ENCODE measurements at regions of chr17 and their contacts with region 1.

Region 1: GRCh38 chr17:67221062-67221998 is 23.7 kb downstream of the HELZ start:
- DNase-seq: peak in 6 of 9 donors; percentile 12 to 56 (median 28)
- ATAC-seq: peak; percentile 90
- H3K4me3 ChIP-seq: no peak overlapping the region
- H3K4me3 Mint-ChIP-seq: peak overlapping the region in 1 of 10 donors; percentile 4
- H3K27ac ChIP-seq: no peak overlapping the region
- H3K27ac Mint-ChIP-seq: peak overlapping the region in 2 of 9 donors; percentile 4 to 5
- H3K4me1 ChIP-seq: peaks cover 0 to 4% of the 10 kb centered on the region in 2 donors
- H3K4me1 Mint-ChIP-seq: peaks cover 27 to 63% (median 56%) of the 10 kb centered on the region in 7 donors
- H3K27me3 ChIP-seq: no peaks in the 10 kb centered on the region
- H3K27me3 Mint-ChIP-seq: no peaks in the 10 kb centered on the region

Region 2: DNA sequence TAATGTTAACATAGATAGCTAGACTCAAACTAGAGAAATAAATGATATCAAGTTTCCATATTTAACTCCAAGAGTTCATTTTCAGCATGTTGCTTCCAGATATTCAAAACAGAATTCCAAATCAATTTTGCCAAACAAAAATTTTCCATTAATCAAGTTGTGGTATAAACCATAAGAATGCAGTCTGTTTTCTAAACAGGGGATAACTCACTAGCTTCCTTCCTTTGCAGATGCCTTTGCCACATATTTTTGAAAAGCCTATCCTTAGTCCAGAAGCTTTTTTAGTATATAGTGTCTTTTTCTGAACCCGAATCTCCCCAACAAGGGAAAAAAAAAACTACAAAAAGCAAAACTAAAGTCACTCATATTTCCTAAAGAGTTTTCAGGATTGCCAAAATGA is 37.8 kb before region 1 on chr17:
- CTCF ChIA-PET with region 1: no interaction called
- POLR2A ChIA-PET with region 1: no interaction called
- intact Hi-C with region 1: no loop called
- DNase-seq: no peak
- ATAC-seq: no peak
- H3K4me3 ChIP-seq: no peak overlapping the region
- H3K4me3 Mint-ChIP-seq: no peak overlapping the region
- H3K27ac ChIP-seq: no peak overlapping the region
- H3K27ac Mint-ChIP-seq: no peak overlapping the region
- H3K4me1 ChIP-seq: no peaks in the 10 kb centered on the region
- H3K4me1 Mint-ChIP-seq: peaks cover 0 to 9% (median 5%) of the 10 kb centered on the region in 7 donors
- H3K27me3 ChIP-seq: no peaks in the 10 kb centered on the region
- H3K27me3 Mint-ChIP-seq: no peaks in the 10 kb centered on the region

Region 3: DNA sequence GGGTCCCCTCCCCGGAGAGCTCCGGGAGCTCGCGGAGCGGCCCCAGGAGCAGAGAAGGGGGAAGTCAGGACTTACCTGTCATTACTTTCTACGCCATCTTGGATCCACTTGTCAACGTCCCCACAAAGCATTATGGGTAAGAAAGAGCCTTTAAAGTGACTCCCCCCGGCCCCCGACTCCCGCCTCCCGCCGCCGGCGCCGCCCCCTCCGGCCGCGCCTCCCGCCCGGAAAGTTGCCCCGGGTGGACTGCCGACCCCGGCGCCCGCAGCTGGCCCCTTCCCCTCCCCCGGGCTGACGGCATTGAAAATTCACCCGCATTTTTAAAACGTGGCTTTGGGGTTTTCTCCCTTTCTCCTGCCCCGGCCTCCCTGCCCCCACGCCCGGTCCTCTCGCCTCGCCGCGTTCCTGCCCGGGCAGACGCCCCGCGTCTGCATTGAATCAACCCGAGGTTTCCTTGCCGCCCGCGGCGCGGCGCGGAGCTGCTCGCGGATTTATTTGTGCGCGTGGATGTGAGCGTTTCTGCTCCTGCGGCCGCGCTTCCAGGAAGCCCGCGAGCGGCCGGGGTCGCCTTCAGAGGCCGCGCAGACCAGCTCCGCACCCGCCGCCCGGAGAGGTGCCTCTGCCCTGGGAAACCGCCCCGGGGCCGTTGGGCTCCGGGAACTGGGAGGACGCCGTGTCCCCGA is 23.9 kb after region 1 on chr17 and contains the start of gene HELZ:
- CTCF ChIA-PET with region 1: no interaction called
- POLR2A ChIA-PET with region 1: no interaction called
- intact Hi-C with region 1: loop called in 1 of 2 experiments (anchors 2 kb)
- DNase-seq: peak; percentile 45 to 81 (median 79)
- ATAC-seq: peak; percentile 89
- H3K4me3 ChIP-seq: peak within 1 kb of the TSS; percentile 83
- H3K4me3 Mint-ChIP-seq: peak within 1 kb of the TSS; percentile 87 to 95 (median 90)
- H3K27ac ChIP-seq: peak within 1 kb of the TSS; percentile 84
- H3K27ac Mint-ChIP-seq: peak within 1 kb of the TSS; percentile 81 to 96 (median 90)
- H3K4me1 ChIP-seq: peaks cover 11 to 49% of the 10 kb centered on the region in 2 donors
- H3K4me1 Mint-ChIP-seq: peaks cover 31 to 52% (median 48%) of the 10 kb centered on the region in 7 donors
- H3K27me3 ChIP-seq: no peaks in the 10 kb centered on the region
- H3K27me3 Mint-ChIP-seq: peaks cover 0 to 5% (median 0%) of the 10 kb centered on the region in 5 donors
- total RNA-seq, gene HELZ: 68.6 to 114 (median 89.3) TPM

Region 4: DNA sequence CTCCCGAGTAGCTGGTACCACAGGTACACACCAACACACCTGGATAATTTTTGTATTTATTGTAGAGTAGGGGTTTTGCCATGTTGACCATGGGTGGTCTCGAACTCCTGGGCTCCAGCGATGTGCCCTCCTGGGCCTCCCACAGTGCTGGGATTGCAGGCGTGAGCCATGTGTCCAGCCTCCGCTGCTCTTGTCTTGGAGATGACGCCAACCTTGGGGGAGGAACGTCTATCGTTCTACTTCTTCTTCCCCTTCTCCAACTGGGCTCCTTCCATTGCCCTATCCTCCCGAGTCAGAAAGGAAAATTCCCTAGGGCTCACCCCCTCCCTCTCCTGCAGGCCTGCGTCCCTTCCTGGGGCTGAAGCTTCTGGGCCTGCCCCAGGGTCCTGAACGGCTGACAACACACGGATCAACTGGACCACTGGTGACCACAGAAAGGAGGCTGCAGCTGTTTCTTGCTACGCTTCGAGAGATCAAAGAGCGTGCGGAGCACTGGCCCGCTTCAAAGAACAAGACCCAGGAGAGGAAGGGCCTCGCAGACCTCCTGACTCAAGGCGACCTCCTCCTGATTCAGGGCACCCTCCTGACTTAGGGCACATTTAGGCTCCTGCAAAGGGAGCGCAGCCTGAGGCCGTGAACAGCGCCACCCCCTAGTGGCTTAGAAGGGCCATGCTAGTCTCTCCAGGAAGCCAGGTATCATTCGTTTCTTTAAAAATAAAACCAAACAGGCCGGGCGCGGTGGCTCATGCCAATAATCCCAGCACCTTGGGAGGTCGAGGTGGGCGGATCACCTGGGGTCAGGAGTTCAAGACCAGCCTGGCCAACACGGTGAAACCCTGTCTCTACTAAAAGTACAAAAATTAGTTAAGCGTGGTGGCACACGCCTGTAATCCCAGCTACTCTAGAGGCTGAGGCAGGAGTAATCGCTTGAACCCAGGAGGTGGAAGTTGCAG is 72.2 kb after region 1 on chr17:
- CTCF ChIA-PET with region 1: no interaction called
- POLR2A ChIA-PET with region 1: interaction called, 3 read pairs
- intact Hi-C with region 1: loop called (anchors 1 kb)
- DNase-seq: peak; percentile 26 to 67 (median 61)
- ATAC-seq: peak; percentile 97
- H3K4me3 ChIP-seq: no peak overlapping the region
- H3K4me3 Mint-ChIP-seq: peak overlapping the region in 9 of 10 donors; percentile 14 to 68 (median 58)
- H3K27ac ChIP-seq: no peak overlapping the region
- H3K27ac Mint-ChIP-seq: peak overlapping the region in 1 of 9 donors; percentile 55
- H3K4me1 ChIP-seq: peaks cover 0 to 4% of the 10 kb centered on the region in 2 donors
- H3K4me1 Mint-ChIP-seq: peaks cover 0 to 5% (median 0%) of the 10 kb centered on the region in 7 donors
- H3K27me3 ChIP-seq: no peaks in the 10 kb centered on the region
- H3K27me3 Mint-ChIP-seq: no peaks in the 10 kb centered on the region

Region 5: GRCh38 chr17:67366193-67367157 is 145.1 kb after region 1 on chr17 and contains the start of gene PSMD12:
- CTCF ChIA-PET with region 1: no interaction called
- POLR2A ChIA-PET with region 1: no interaction called
- intact Hi-C with region 1: loop called in 1 of 2 experiments (anchors 5 kb)
- DNase-seq: peak; percentile 86 to 96 (median 93)
- ATAC-seq: peak; percentile 99
- H3K4me3 ChIP-seq: peak within 1 kb of the TSS; percentile 76
- H3K4me3 Mint-ChIP-seq: peak within 1 kb of the TSS; percentile 91 to 99 (median 96)
- H3K27ac ChIP-seq: peak within 1 kb of the TSS; percentile 89
- H3K27ac Mint-ChIP-seq: peak within 1 kb of the TSS; percentile 82 to 99 (median 96)
- H3K4me1 ChIP-seq: peaks cover 22 to 25% of the 10 kb centered on the region in 2 donors
- H3K4me1 Mint-ChIP-seq: peaks cover 32 to 51% (median 47%) of the 10 kb centered on the region in 7 donors
- H3K27me3 ChIP-seq: no peaks in the 10 kb centered on the region
- H3K27me3 Mint-ChIP-seq: no peaks in the 10 kb centered on the region
- total RNA-seq, gene PSMD12: 35.8 to 54.4 (median 40.5) TPM

Region 6: GRCh38 chr17:67689534-67690177 is 468.3 kb after region 1 on chr17:
- CTCF ChIA-PET with region 1: no interaction called
- POLR2A ChIA-PET with region 1: no interaction called
- intact Hi-C with region 1: loop called in 1 of 2 experiments (anchors 1 kb)
- DNase-seq: peak in 8 of 9 donors; percentile 30 to 72 (median 58)
- ATAC-seq: peak; percentile 76
- H3K4me3 ChIP-seq: no peak overlapping the region
- H3K4me3 Mint-ChIP-seq: no peak overlapping the region
- H3K27ac ChIP-seq: no peak overlapping the region
- H3K27ac Mint-ChIP-seq: peak overlapping the region in 1 of 9 donors; percentile 31
- H3K4me1 ChIP-seq: no peaks in the 10 kb centered on the region
- H3K4me1 Mint-ChIP-seq: peaks cover 0 to 7% (median 4%) of the 10 kb centered on the region in 7 donors
- H3K27me3 ChIP-seq: no peaks in the 10 kb centered on the region
- H3K27me3 Mint-ChIP-seq: no peaks in the 10 kb centered on the region

Measured in naive thymus-derived CD4-positive, alpha-beta T cell (primary cell).